ENCODE measurements at regions of chr14 and their contacts with region 1.

Region 1: DNA sequence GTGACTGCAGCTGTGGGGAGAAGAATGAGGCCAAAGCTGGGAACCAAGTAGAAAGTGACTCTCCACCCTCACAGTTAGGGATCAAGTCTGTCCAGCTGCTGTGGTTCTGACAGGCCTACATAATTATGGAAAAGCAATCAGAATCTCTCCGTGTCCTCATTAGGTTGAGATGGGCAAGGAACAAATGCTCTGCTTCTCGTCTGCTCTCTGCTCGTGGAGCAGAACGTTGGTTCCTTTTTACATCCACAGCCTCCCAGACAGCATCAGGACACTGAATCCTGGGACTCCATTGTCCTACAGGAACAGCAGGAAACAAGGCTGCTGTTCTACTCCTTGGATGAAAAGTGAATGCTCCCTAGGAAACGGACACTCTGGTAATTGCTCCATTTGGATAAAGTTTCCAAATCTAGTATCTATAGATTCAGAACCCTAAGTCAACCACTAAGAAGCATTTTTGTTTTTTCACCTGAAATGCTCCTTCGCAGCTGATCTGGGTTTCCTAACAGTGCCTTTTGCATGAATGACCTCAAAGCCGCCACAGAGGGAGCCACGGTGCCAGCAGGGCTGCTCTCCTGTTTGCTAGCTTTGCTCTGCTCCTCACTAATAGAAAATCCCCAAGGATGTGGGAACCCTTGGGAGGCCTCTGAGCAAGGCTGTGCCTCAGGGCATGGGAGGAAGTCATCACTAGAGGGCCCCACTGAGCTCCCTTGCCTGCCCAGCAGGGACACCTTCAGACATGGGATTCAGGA is 102.0 kb downstream of the EGLN3 start:
- DNase-seq: peak; percentile 90
- ATAC-seq: peak; percentile 99
- H3K4me3 Mint-ChIP-seq: no peak overlapping the region
- H3K27ac Mint-ChIP-seq: no peak overlapping the region
- H3K4me1 Mint-ChIP-seq: peaks cover 38% of the 10 kb centered on the region
- H3K27me3 Mint-ChIP-seq: no peaks in the 10 kb centered on the region
- CTCF ChIP-seq: peak; percentile 71

Region 2: DNA sequence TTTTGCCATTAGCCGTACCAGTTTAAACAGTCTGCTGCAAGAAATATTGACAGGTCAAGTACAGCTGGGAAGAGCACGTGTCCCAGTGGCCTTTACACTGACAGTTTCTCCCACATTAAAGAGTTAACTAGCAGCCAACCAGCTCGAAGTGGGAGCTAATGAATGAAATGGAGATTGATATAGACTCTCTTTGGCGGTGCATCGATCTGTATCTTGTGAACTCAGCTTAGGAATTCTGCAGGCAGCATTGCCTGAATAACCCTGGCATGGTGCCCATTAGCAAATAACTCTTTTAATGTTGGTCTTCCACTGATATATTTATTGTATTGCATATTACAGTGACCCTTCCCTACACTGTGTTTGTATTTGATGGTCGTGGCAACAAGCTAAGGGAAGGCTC is 217.4 kb before region 1 on chr14:
- CTCF ChIA-PET with region 1: no interaction called
- POLR2A ChIA-PET with region 1: no interaction called
- DNase-seq: no peak
- ATAC-seq: no peak
- H3K4me3 Mint-ChIP-seq: no peak overlapping the region
- H3K27ac Mint-ChIP-seq: no peak overlapping the region
- H3K4me1 Mint-ChIP-seq: peaks cover 34% of the 10 kb centered on the region
- H3K27me3 Mint-ChIP-seq: no peaks in the 10 kb centered on the region
- CTCF ChIP-seq: no peak

Region 3: DNA sequence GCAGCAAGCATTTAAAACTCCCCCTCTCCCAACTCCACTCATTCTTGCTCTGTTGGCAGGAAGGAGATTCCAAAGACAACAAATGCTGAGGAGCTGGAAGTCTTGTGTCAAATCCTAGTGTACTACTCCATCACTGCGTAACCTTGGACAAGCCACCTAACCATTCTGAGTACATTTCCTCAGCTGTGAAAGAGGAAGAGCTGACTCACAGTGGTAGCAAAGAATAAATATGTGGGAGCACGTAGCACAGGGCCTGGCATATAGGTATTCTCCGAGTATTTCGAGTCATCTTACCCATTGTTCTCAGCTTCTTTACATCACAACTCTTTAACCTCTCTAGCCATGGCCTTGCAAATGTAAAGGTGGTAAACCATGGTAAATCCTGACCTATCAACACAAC is 73.2 kb after region 1 on chr14:
- CTCF ChIA-PET with region 1: interaction called, 11 read pairs
- POLR2A ChIA-PET with region 1: interaction called, 3 read pairs
- DNase-seq: no peak
- ATAC-seq: no peak; the same call in 1 of the 2 replicates
- H3K4me3 Mint-ChIP-seq: no peak overlapping the region
- H3K27ac Mint-ChIP-seq: peak overlapping the region; percentile 65
- H3K4me1 Mint-ChIP-seq: peaks cover 36% of the 10 kb centered on the region
- H3K27me3 Mint-ChIP-seq: no peaks in the 10 kb centered on the region
- CTCF ChIP-seq: no peak

Region 4: DNA sequence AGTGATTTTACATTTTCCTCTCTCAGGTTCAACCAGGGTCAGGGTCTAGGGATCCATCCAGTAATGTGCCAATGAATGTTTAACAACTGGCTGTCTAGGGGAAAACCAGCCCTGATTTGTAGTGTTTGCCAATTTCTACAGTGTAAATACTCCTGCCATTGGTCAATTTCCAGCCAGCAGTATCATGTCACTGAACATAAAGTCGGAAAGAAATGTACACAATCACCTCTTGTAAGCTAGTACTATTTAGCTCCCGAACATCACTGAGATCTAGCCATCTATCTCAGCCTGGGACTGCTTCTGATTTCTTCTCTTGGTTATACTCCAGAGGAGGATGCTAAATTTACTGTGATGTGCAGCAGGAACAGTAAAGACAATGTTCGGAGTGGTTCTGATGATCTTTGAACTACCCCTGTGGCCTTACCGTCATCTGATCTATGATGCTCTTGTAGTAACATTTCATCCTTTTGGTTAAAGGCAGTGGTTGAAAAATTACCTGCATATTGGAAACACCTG is 138.7 kb after region 1 on chr14:
- CTCF ChIA-PET with region 1: no interaction called
- POLR2A ChIA-PET with region 1: no interaction called
- DNase-seq: no peak
- ATAC-seq: no peak
- H3K4me3 Mint-ChIP-seq: no peak overlapping the region
- H3K27ac Mint-ChIP-seq: no peak overlapping the region
- H3K4me1 Mint-ChIP-seq: no peaks in the 10 kb centered on the region
- H3K27me3 Mint-ChIP-seq: no peaks in the 10 kb centered on the region
- CTCF ChIP-seq: no peak

Region 5: GRCh38 chr14:34003691-34004090 is 154.8 kb after region 1 on chr14:
- CTCF ChIA-PET with region 1: interaction called, 15 read pairs
- POLR2A ChIA-PET with region 1: no interaction called
- DNase-seq: no peak
- ATAC-seq: no peak
- H3K4me3 Mint-ChIP-seq: no peak overlapping the region
- H3K27ac Mint-ChIP-seq: no peak overlapping the region
- H3K4me1 Mint-ChIP-seq: no peaks in the 10 kb centered on the region
- H3K27me3 Mint-ChIP-seq: no peaks in the 10 kb centered on the region; the same call in 1 of the 2 replicates
- CTCF ChIP-seq: no peak

Region 6: GRCh38 chr14:34081576-34082136 is 232.8 kb after region 1 on chr14:
- CTCF ChIA-PET with region 1: interaction called, 13 read pairs
- POLR2A ChIA-PET with region 1: no interaction called
- DNase-seq: no peak
- ATAC-seq: no peak
- H3K4me3 Mint-ChIP-seq: no peak overlapping the region
- H3K27ac Mint-ChIP-seq: peak overlapping the region; percentile 11; the same call in 1 of the 2 replicates
- H3K4me1 Mint-ChIP-seq: peaks cover 6% of the 10 kb centered on the region
- H3K27me3 Mint-ChIP-seq: peaks cover 17% of the 10 kb centered on the region
- CTCF ChIP-seq: no peak

Region 7: DNA sequence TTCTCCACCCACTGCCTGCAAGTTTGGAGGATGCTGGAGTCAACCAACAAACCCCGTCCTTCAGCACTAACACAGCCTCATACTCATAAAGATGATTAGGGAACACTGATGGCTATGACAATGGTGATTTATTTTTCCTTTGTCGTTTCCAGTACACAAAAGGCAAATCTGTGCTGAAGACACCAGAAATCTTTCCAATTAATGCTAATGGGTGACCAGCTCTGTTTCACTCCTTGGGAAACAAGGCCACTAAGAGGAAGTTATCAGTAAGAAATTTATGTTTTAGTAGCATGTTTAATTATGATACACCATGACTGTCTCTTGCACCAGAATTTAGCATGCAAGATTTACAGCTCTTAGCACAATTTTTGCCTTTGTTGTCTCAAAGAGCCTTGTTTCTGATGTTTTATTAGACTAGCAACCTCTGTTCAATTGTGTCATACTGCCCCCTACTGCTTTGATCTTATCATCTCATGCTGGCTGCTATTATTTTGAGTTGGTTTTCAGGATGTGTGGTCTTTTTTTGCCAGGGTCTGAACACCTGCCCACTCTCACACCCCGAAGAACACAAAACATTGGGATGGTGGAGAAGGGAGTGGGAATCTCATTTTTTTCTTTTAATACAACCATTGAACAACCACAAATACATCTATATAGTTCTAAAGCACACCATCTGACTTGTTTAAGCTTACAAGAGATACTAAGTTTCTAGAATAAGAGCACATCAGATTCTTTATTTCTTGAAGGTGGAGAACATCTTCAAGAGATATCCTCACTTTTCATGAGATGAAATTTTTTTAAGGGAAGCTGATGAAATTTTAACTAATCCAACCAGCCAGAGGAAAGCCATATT is 452.2 kb after region 1 on chr14:
- CTCF ChIA-PET with region 1: interaction called, 16 read pairs
- POLR2A ChIA-PET with region 1: no interaction called
- DNase-seq: no peak
- ATAC-seq: peak; percentile 50
- H3K4me3 Mint-ChIP-seq: no peak overlapping the region
- H3K27ac Mint-ChIP-seq: no peak overlapping the region
- H3K4me1 Mint-ChIP-seq: peaks cover 18% of the 10 kb centered on the region
- H3K27me3 Mint-ChIP-seq: peaks cover 29% of the 10 kb centered on the region
- CTCF ChIP-seq: peak; percentile 73

Region 8: DNA sequence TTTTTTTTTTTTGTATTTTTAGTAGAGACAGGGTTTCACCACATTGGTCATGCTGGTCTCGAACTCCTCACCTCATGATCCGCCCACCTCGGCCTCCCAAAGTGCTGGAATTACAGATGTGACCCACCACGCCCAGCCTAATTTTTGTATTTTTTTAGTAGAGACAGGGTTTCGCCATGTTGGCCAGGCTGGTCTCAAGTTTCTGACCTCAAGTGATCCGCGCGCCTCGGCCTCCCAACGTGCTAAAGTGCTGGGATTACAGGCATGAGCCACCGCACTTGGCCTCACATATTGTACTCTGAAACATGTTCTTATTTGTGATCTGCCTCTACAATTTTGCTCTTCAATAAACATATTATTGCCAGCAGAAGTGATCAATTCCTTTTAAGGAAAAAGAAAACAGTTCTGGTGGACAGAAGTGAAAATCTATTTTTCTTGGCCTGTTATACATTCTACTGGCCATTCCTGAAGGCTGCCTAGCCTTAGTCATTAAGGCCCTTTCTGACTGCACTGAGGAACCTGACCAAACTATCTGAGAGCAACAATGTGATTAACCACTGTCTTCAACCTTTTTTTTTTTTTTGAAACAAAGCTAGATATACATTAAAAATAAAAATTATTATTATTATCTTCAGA is 745.0 kb after region 1 on chr14:
- CTCF ChIA-PET with region 1: no interaction called
- POLR2A ChIA-PET with region 1: no interaction called
- DNase-seq: no peak
- ATAC-seq: no peak
- H3K4me3 Mint-ChIP-seq: no peak overlapping the region
- H3K27ac Mint-ChIP-seq: no peak overlapping the region
- H3K4me1 Mint-ChIP-seq: no peaks in the 10 kb centered on the region
- H3K27me3 Mint-ChIP-seq: no peaks in the 10 kb centered on the region
- CTCF ChIP-seq: no peak